ENCODE measurements at regions of chr17 and their contacts with region 1.

Region 1: GRCh38 chr17:34542700-34543336 is 36.6 kb upstream of the TMEM132E start:
- DNase-seq: no peak
- ATAC-seq: no peak
- H3K4me3 ChIP-seq: no peak overlapping the region
- H3K27ac ChIP-seq: no peak overlapping the region
- H3K4me1 ChIP-seq: no peaks in the 10 kb centered on the region
- H3K27me3 ChIP-seq: peaks cover 1 to 3% of the 10 kb centered on the region in 2 experiments; a peak in 1 of 5 replicates
- CTCF ChIP-seq: peak; percentile 73
- EP300 ChIP-seq: no peak
- POLR2A ChIP-seq: no peak
- RAD21 ChIP-seq: no peak

Region 2: GRCh38 chr17:34637548-34638525 is 95.0 kb after region 1 on chr17:
- CTCF ChIA-PET with region 1: interaction called, 10 read pairs
- POLR2A ChIA-PET with region 1: no interaction called
- in situ Hi-C with region 1: no loop called
- intact Hi-C with region 1: loop called (anchors 1 kb)
- DNase-seq: peak; percentile 45
- ATAC-seq: peak; percentile 95
- H3K4me3 ChIP-seq: no peak overlapping the region
- H3K27ac ChIP-seq: no peak overlapping the region
- H3K4me1 ChIP-seq: no peaks in the 10 kb centered on the region
- H3K27me3 ChIP-seq: peaks cover 7 to 26% of the 10 kb centered on the region in 2 experiments; a peak in 4 of 5 replicates
- CTCF ChIP-seq: peak; percentile 85
- EP300 ChIP-seq: no peak
- POLR2A ChIP-seq: no peak
- RAD21 ChIP-seq: peak; percentile 55

Region 3: DNA sequence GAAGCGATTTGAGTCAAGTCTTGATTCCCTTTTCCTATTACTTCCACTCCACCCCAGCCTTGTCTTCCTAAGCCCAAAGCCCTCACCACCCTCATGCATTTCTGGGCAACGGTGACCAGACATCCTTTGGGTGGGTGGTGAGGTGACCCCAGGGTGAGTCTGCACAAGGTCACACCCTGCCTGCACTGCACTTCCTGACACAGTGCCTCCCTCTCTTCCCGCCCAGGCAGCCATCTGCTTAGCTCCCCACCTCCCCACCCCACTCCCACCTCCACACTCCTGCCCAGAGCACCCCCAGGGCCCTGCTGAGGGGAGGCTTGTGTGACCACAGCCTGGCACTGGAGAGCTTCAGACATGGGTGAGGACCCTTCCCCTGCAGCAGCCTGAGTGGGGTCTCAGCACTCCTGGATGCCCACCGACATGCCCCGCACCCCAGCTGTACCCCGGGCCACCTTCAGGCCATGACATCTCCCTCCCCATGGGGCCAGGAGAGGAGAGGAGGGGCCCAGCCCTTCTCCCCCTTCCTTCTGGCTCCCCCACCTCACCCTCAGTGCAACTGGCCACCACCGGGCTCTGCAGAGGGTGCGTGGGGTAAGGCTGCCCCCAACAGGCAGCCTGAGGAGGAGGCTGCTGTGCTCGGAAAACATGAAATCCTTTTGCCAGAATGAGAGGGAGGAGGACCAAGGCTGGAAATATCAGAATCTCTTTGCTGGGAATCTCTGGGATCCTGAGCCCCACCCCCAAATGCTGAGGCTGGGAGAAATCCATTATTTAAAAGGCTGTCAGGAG is 349.8 kb after region 1 on chr17:
- CTCF ChIA-PET with region 1: interaction called, 4 read pairs
- POLR2A ChIA-PET with region 1: no interaction called
- in situ Hi-C with region 1: loop called (anchors 25 kb)
- intact Hi-C with region 1: no loop called
- DNase-seq: no peak
- ATAC-seq: peak; percentile 76
- H3K4me3 ChIP-seq: no peak overlapping the region
- H3K27ac ChIP-seq: no peak overlapping the region
- H3K4me1 ChIP-seq: no peaks in the 10 kb centered on the region
- H3K27me3 ChIP-seq: peaks cover 0 to 6% of the 10 kb centered on the region in 2 experiments; a peak in 2 of 5 replicates
- CTCF ChIP-seq: peak; percentile 68
- EP300 ChIP-seq: no peak
- POLR2A ChIP-seq: no peak
- RAD21 ChIP-seq: peak; percentile 46; the same call in 1 of the 2 replicates

Measured in HepG2 (cell line).